B cell (primary cell): ENCODE measurements at regions of chr7 and their contacts with region 1.

Region 1: DNA sequence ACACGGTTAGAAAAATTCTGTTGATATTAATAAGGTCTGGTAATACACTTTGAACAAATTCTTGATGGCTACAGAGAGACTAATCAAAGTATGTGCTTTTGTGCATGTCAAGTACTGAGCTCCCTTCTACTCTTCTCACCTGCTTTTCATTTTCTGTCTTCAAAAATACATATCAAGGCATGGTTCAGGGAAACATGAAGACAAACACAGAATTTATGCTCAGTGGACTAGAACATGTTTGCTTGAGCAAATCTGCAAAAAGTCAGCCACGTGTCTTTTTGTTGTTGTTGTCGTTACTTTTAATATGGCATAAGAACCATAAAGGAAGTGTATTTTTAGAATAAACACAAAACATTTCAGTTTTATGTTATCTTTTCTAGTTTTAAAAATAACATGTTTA is 21.9 kb downstream of the CDK13 start:
- DNase-seq: peak; percentile 54
- ATAC-seq: peak; percentile 63
- H3K4me3 ChIP-seq: peak overlapping the region in 1 of 5 experiments; percentile 37
- H3K4me3 Mint-ChIP-seq: peak overlapping the region; percentile 68
- H3K27ac ChIP-seq: peak overlapping the region; percentile 46 to 80
- H3K27ac Mint-ChIP-seq: peak overlapping the region; percentile 84
- H3K4me1 ChIP-seq: peaks cover 89 to 97% of the 10 kb centered on the region in 2 donors
- H3K4me1 Mint-ChIP-seq: peaks cover 81% of the 10 kb centered on the region
- H3K27me3 ChIP-seq: no peaks in the 10 kb centered on the region
- H3K27me3 Mint-ChIP-seq: no peaks in the 10 kb centered on the region
- CTCF ChIP-seq: no peak

Region 2: GRCh38 chr7:39958038-39958437 is 13.9 kb before region 1 on chr7:
- CTCF ChIA-PET with region 1: interaction called, 8 read pairs
- POLR2A ChIA-PET with region 1: interaction called, 4 read pairs
- intact Hi-C with region 1: loop called (anchors 2 kb)
- DNase-seq: no peak
- ATAC-seq: no peak
- H3K4me3 ChIP-seq: peak overlapping the region in 2 of 5 experiments; percentile 9 to 35
- H3K4me3 Mint-ChIP-seq: peak overlapping the region; percentile 41
- H3K27ac ChIP-seq: peak overlapping the region in 1 of 2 donors; percentile 49
- H3K27ac Mint-ChIP-seq: peak overlapping the region; percentile 41
- H3K4me1 ChIP-seq: peaks cover 32 to 51% of the 10 kb centered on the region in 2 donors
- H3K4me1 Mint-ChIP-seq: peaks cover 73% of the 10 kb centered on the region
- H3K27me3 ChIP-seq: no peaks in the 10 kb centered on the region
- H3K27me3 Mint-ChIP-seq: no peaks in the 10 kb centered on the region
- CTCF ChIP-seq: no peak

Region 3: GRCh38 chr7:39987476-39988347 is 15.8 kb after region 1 on chr7:
- CTCF ChIA-PET with region 1: interaction called, 4 read pairs
- POLR2A ChIA-PET with region 1: interaction called, 4 read pairs
- intact Hi-C with region 1: loop called (anchors 2 kb)
- DNase-seq: no peak
- ATAC-seq: no peak
- H3K4me3 ChIP-seq: no peak overlapping the region
- H3K4me3 Mint-ChIP-seq: no peak overlapping the region
- H3K27ac ChIP-seq: no peak overlapping the region
- H3K27ac Mint-ChIP-seq: no peak overlapping the region
- H3K4me1 ChIP-seq: peaks cover 14 to 18% of the 10 kb centered on the region in 2 donors
- H3K4me1 Mint-ChIP-seq: peaks cover 49% of the 10 kb centered on the region
- H3K27me3 ChIP-seq: no peaks in the 10 kb centered on the region
- H3K27me3 Mint-ChIP-seq: no peaks in the 10 kb centered on the region
- CTCF ChIP-seq: no peak